Thyroid gland (tissue), 4 donors: ENCODE measurements at regions of chr13 and their contacts with region 1.

Region 1: DNA sequence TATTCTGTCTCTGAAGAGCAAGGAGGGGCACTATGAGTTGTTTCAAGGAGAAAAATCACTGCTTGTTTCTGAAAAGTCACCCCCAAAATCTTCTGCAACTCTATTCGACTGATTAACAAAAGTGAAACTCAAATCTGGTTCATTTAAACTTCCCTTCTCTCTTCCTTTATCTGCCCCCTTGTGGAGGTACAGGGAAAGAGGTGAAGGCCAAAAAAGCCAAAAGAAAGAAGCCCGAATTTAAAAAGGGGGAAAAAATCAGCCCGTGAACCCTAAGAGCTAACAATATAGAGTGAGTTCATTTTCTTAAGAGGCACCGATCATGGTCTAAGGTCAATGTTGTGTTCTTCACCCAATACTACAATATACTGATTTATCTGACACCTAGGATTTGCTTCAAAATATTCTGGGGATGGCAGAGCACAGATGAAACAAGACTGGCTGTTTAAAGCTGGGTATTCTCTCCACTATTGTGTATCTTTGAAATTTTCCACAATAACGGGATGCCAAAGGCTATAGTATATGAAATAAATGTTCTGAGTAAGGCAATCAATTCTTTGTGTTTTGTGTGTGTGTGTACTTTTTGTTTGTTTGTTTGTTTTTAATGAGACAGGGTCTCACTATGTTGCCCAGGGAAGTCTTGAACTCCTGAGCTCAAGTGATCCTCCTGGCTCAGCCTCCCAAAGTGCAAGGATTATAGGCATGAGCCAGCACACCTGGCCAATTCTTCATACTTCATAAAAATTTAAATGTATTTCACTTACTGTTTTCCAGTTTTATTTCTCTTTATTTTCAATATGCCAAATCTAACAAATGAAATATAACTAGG is 55.0 kb upstream of the EEF1AKMT1 start:
- DNase-seq: peak in 1 of 2 donors; percentile 23
- H3K4me3 ChIP-seq: no peak overlapping the region
- H3K27ac ChIP-seq: peak overlapping the region in 1 of 3 donors; percentile 21
- H3K4me1 ChIP-seq: peaks cover 12 to 18% of the 10 kb centered on the region in 2 donors
- H3K27me3 ChIP-seq: no peaks in the 10 kb centered on the region
- CTCF ChIP-seq: peak; percentile 59 to 88 (median 74)
- POLR2A ChIP-seq: no peak

Region 2: GRCh38 chr13:20495082-20496023 is 333.4 kb before region 1 on chr13:
- intact Hi-C with region 1: loop called (anchors 10 kb)
- DNase-seq: peak; percentile 64
- H3K4me3 ChIP-seq: no peak overlapping the region
- H3K27ac ChIP-seq: no peak overlapping the region
- H3K4me1 ChIP-seq: no peaks in the 10 kb centered on the region
- H3K27me3 ChIP-seq: no peaks in the 10 kb centered on the region
- CTCF ChIP-seq: peak; percentile 81 to 93 (median 88)
- POLR2A ChIP-seq: no peak

Region 3: DNA sequence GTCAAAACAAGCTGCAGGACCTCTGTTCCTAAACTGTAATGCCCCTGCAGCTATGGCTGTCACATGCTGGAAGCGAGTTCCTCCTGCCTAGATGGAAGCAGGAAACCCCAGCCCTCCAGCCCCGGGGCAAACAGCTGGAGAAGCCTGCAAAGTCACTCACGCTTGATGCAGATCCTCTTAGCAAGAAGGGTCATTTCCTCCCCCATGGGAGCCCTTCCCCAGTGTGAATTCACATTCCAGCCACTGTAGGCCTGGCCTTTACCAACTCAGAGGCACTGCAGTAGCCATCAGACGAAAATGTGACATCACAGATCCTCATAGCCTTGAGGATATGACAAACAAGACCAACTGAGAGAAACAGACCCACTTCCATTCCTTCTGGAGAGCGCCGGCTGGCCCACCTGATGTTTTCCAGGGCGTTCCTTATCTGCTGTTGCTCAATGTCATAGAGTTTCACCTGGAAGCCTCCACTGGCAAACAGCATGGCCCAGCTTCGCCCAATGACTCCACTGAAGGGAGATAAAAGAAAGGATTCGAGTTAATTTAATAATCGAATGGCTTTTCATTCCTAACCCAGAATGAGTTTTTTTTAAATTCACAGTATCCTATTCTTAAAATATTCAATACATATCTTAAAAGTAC is 316.6 kb before region 1 on chr13:
- intact Hi-C with region 1: loop called (anchors 10 kb)
- DNase-seq: no peak
- H3K4me3 ChIP-seq: no peak overlapping the region
- H3K27ac ChIP-seq: no peak overlapping the region
- H3K4me1 ChIP-seq: no peaks in the 10 kb centered on the region
- H3K27me3 ChIP-seq: no peaks in the 10 kb centered on the region
- CTCF ChIP-seq: no peak
- POLR2A ChIP-seq: no peak

Region 4: DNA sequence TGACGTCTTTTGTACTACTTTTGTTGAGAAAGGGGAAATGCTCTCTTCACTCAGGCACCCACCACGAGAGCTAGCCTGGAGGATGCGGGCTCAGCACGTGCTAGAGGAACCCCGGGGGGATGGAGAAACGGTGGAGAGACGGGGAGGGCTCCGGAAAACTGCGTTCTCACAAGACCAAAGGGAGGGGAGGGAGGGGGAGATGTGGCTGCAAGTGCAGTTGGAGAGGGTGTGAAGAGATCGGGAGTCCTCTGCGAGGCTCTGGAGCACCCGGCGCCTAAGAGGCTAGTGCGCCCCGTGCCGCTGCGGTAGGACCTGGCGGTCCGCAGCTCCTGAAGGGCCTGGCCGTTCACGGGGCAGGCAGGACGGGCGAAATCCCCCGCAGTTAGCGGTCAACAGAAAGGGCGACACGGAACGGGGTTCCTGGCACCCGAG is 117.2 kb after region 1 on chr13:
- intact Hi-C with region 1: no loop called
- DNase-seq: peak; percentile 7 to 9
- H3K4me3 ChIP-seq: no peak overlapping the region
- H3K27ac ChIP-seq: no peak overlapping the region
- H3K4me1 ChIP-seq: peaks cover 0 to 10% of the 10 kb centered on the region in 2 donors
- H3K27me3 ChIP-seq: no peaks in the 10 kb centered on the region
- CTCF ChIP-seq: no peak
- POLR2A ChIP-seq: no peak